Calu3 (cell line): ENCODE measurements at regions of chr20 and their contacts with region 1.

Region 1: DNA sequence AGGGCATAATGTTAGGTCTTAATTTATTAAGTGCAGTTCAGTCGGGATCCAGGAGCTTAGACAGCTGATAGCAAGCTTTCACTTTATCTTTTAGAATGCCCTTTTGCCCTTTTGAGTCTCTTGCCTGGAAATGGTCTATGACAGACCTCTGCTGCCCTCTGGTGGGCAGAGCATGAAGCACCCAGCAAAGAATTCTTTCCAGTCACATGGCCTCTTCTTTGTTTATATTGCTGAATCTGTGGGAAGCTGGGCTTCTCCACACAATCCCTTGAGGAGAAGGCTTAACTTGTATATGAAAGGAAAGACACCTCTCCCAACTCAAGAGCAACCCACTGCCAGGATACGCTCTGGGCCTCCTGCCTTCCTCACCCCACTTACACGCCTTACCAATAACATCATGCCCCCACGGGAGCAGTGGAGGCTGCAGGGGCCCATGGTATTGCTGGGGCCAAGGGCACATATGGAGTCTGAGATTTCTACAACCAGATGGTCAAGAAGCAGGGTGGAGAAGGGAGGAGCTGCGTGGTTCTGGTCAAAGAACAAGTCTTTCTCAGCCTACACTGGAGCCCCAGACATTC is 20.4 kb downstream of the WFDC3 start:
- DNase-seq: peak; percentile 86
- H3K4me3 Mint-ChIP-seq: no peak overlapping the region
- H3K27ac Mint-ChIP-seq: peak overlapping the region; percentile 23
- H3K4me1 Mint-ChIP-seq: peaks cover 21% of the 10 kb centered on the region
- H3K27me3 Mint-ChIP-seq: peaks cover 16% of the 10 kb centered on the region
- CTCF ChIP-seq: peak; percentile 91

Region 2: GRCh38 chr20:45322952-45323383 is 448.3 kb before region 1 on chr20:
- CTCF ChIA-PET with region 1: interaction called, 21 read pairs
- intact Hi-C with region 1: loop called (anchors 1 kb)
- DNase-seq: peak; percentile 70
- H3K4me3 Mint-ChIP-seq: peak overlapping the region; percentile 6
- H3K27ac Mint-ChIP-seq: peak overlapping the region; percentile 5
- H3K4me1 Mint-ChIP-seq: peaks cover 21% of the 10 kb centered on the region
- H3K27me3 Mint-ChIP-seq: peaks cover 17% of the 10 kb centered on the region
- CTCF ChIP-seq: peak; percentile 65

Region 3: GRCh38 chr20:45373353-45374100 is 397.7 kb before region 1 on chr20:
- CTCF ChIA-PET with region 1: interaction called, 22 read pairs
- intact Hi-C with region 1: no loop called
- DNase-seq: peak; percentile 98
- H3K4me3 Mint-ChIP-seq: peak overlapping the region; percentile 84
- H3K27ac Mint-ChIP-seq: peak overlapping the region; percentile 70
- H3K4me1 Mint-ChIP-seq: no peaks in the 10 kb centered on the region
- H3K27me3 Mint-ChIP-seq: no peaks in the 10 kb centered on the region
- CTCF ChIP-seq: peak; percentile 94

Region 4: DNA sequence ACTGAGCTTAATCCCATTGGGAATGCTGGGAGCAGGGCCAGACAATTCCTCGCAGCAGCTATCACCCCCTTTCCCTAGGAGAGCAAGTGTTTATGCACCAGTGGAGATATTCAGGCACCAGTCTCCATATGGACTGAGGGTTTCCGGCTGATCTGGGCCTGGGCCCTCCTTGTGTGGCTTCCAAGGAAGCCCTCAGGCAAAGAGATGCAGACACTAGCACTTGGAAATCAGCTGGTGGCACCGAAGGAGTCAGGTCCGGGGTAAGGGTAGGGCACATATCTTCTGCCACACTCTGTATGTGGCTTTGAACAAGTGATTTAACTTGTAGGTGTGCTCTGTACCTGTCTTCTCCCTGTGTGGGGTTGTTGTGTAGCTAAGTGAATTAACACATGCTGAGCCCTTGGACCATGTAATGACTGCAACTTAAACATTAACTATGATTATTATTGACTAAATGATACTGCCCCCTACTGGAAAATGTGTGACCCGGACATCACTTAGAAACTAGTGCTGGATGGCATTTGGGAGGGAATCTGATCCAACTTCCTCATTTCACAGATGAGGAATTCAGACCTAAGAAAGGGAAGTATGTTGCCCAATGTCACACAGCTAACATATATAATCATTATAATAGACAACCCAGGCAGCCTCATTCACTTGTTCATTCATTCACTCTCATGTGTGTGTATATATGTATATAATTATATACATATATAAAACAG is 321.0 kb before region 1 on chr20:
- CTCF ChIA-PET with region 1: interaction called, 9 read pairs
- intact Hi-C with region 1: loop called (anchors 5 kb)
- DNase-seq: peak; percentile 41
- H3K4me3 Mint-ChIP-seq: no peak overlapping the region
- H3K27ac Mint-ChIP-seq: no peak overlapping the region
- H3K4me1 Mint-ChIP-seq: peaks cover 33% of the 10 kb centered on the region
- H3K27me3 Mint-ChIP-seq: peaks cover 48% of the 10 kb centered on the region
- CTCF ChIP-seq: peak; percentile 88

Region 5: DNA sequence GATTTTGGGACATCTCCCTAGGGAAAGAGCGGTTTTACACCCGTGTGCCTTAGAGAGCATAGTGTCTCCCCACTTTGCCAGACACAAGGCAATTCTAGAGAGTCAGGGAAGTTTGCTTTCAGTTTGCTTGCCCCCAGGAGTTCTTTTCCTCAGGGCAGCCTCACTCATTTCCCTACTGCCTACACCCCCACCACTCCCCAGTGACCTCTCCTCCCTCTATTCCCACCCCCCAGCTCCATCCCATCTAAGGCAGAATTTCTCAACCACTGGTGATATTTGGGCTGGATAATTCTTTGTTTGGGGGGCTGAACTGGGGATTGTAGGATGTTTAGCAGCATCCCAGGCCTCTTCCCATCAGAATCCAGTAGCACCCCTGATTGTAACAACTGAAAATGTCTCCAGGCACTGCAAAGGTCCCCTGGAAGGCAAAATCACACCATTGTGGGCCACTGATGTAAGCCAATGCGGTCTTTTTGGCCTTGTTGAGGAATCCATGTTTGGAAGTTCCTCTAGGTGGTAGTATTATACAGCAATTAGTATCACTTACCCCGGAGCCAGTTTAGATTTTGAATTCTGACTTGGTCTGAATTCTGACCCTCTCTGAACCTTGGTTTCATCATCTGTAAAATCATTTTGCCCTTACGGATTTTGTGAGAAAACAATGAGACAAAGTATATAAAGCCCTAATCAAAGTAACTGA is 225.4 kb before region 1 on chr20:
- CTCF ChIA-PET with region 1: interaction called, 8 read pairs
- intact Hi-C with region 1: loop called (anchors 1 kb)
- DNase-seq: no peak
- H3K4me3 Mint-ChIP-seq: no peak overlapping the region
- H3K27ac Mint-ChIP-seq: no peak overlapping the region
- H3K4me1 Mint-ChIP-seq: peaks cover 7% of the 10 kb centered on the region
- H3K27me3 Mint-ChIP-seq: peaks cover 40% of the 10 kb centered on the region
- CTCF ChIP-seq: peak; percentile 12

Region 6: GRCh38 chr20:45629496-45630100 is 141.7 kb before region 1 on chr20 and contains the start of gene WFDC10A:
- CTCF ChIA-PET with region 1: interaction called, 15 read pairs
- intact Hi-C with region 1: loop called (anchors 10 kb)
- DNase-seq: peak; percentile 75
- H3K4me3 Mint-ChIP-seq: no peak within 1 kb of the TSS
- H3K27ac Mint-ChIP-seq: no peak within 1 kb of the TSS
- H3K4me1 Mint-ChIP-seq: no peaks in the 10 kb centered on the region
- H3K27me3 Mint-ChIP-seq: peaks cover 55% of the 10 kb centered on the region
- CTCF ChIP-seq: peak; percentile 79
- total RNA-seq, gene WFDC10A: not detected in 2 replicates

Region 7: DNA sequence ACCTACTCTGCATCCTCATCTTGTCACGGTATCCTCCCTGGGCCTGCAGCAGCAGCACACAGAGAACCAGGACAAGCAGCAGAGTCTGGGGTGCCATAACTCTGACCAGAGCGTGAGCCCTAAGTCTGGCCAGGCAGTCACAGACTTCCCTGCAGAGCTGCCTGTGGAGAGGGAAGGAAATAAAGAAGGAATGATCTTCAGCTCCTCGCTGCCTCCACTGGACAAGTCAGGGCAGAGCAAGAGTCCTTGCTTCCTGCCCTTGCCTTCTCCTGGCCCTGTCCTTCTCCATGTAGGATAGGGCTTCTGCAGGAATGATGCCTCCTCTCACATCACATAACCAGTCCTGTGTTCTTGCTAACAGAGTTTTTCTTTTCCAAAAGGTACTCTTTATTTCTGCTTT is 85.4 kb before region 1 on chr20:
- CTCF ChIA-PET with region 1: no interaction called
- intact Hi-C with region 1: no loop called
- DNase-seq: peak; percentile 11
- H3K4me3 Mint-ChIP-seq: no peak overlapping the region
- H3K27ac Mint-ChIP-seq: no peak overlapping the region
- H3K4me1 Mint-ChIP-seq: no peaks in the 10 kb centered on the region
- H3K27me3 Mint-ChIP-seq: peaks cover 66% of the 10 kb centered on the region
- CTCF ChIP-seq: peak; percentile 16

Region 8: GRCh38 chr20:45725134-45725533 is 46.1 kb before region 1 on chr20:
- CTCF ChIA-PET with region 1: no interaction called
- intact Hi-C with region 1: no loop called
- DNase-seq: no peak
- H3K4me3 Mint-ChIP-seq: no peak overlapping the region
- H3K27ac Mint-ChIP-seq: no peak overlapping the region
- H3K4me1 Mint-ChIP-seq: peaks cover 7% of the 10 kb centered on the region
- H3K27me3 Mint-ChIP-seq: peaks cover 63% of the 10 kb centered on the region
- CTCF ChIP-seq: no peak